Activated CD4-positive, alpha-beta memory T cell treated with anti-CD3 and anti-CD28 coated beads, Interleukin-2, amount 10 ng/mL, durations not matched to agents 7 days and 5 days (primary cell): ENCODE measurements at regions of chr1 and their contacts with region 1.

Region 1: DNA sequence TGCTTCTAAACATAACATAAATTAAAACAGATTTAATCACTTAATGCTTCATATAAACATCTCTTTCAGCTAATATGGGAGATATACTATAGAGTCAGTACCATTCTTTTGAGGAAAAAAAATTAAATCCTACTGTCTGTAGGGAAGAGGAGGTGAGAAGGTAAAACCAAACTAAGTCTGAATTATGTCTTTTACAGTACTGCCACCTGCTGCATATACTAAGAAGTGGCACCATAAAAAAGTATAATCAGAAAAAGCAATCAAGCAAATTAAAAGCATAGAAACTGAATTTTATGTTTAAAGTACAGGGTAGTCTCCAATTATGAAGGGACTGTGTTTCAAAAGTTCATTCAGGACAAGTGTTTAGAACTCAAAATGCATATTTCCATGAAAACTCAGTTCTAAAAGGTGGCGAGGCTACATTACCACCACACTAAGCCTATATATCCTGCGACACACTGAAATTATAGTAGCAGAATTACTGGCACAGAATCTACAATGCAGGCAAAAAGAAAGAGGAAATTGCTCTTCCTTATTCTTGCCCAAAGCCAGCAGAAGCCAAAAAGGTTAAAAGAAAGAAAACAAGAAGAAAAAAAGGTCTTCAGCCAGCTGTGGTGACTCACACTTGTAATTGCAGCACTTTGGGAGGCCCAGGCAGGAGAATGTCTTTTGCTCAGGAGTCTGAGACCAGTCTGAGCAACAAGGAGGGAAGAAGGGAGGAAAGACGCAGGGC is 9.0 kb downstream of the NSL1 start:
- DNase-seq: no peak
- H3K4me3 Mint-ChIP-seq: no peak overlapping the region
- H3K27ac Mint-ChIP-seq: no peak overlapping the region
- H3K4me1 Mint-ChIP-seq: peaks cover 20% of the 10 kb centered on the region
- H3K27me3 Mint-ChIP-seq: no peaks in the 10 kb centered on the region

Region 2: GRCh38 chr1:212477014-212477679 is 305.4 kb before region 1 on chr1:
- CTCF ChIA-PET with region 1: interaction called, 27 read pairs
- POLR2A ChIA-PET with region 1: interaction called, 4 read pairs
- DNase-seq: peak; percentile 79
- H3K4me3 Mint-ChIP-seq: no peak overlapping the region
- H3K27ac Mint-ChIP-seq: no peak overlapping the region
- H3K4me1 Mint-ChIP-seq: peaks cover 19% of the 10 kb centered on the region
- H3K27me3 Mint-ChIP-seq: peaks cover 19% of the 10 kb centered on the region

Region 3: GRCh38 chr1:212518188-212519054 is 264.2 kb before region 1 on chr1:
- CTCF ChIA-PET with region 1: no interaction called
- POLR2A ChIA-PET with region 1: no interaction called
- DNase-seq: no peak
- H3K4me3 Mint-ChIP-seq: no peak overlapping the region
- H3K27ac Mint-ChIP-seq: no peak overlapping the region
- H3K4me1 Mint-ChIP-seq: peaks cover 7% of the 10 kb centered on the region
- H3K27me3 Mint-ChIP-seq: peaks cover 51% of the 10 kb centered on the region

Region 4: DNA sequence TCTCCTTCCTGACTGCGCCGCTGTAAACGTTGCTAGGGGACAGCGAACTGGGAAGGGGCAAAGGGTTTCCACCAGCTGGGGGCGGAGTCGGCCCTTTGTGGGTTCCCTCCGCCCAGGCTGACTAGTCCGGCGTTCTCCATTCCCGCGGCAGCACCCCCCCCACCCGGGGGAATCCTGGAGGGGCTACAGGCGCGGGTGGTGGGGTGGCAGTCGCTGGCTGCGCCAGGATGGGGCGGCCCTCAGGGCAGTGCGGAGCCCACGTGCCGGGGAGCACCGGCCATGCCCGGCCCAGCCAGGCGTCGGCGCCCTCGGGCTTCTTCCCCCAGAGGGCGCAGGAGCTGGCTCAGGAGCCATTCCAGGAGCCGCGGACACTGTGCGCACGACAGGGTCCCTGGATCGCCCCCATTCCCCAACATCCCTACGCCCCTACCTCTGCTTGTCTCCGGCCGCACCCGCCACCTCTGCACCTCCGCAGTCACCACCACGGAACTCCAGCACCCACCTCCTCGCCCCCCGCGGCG is 83.4 kb before region 1 on chr1:
- CTCF ChIA-PET with region 1: interaction called, 13 read pairs
- POLR2A ChIA-PET with region 1: no interaction called
- DNase-seq: peak; percentile 66
- H3K4me3 Mint-ChIP-seq: peak overlapping the region; percentile 74
- H3K27ac Mint-ChIP-seq: peak overlapping the region; percentile 77
- H3K4me1 Mint-ChIP-seq: peaks cover 75% of the 10 kb centered on the region
- H3K27me3 Mint-ChIP-seq: peaks cover 2% of the 10 kb centered on the region